ENCODE measurements at regions of chrX and their contacts with region 1.

Region 1: GRCh38 chrX:148049441-148049840 is 68.3 kb downstream of the FMR1NB start:
- DNase-seq: peak; percentile 22
- CTCF ChIP-seq: peak; percentile 18

Region 2: DNA sequence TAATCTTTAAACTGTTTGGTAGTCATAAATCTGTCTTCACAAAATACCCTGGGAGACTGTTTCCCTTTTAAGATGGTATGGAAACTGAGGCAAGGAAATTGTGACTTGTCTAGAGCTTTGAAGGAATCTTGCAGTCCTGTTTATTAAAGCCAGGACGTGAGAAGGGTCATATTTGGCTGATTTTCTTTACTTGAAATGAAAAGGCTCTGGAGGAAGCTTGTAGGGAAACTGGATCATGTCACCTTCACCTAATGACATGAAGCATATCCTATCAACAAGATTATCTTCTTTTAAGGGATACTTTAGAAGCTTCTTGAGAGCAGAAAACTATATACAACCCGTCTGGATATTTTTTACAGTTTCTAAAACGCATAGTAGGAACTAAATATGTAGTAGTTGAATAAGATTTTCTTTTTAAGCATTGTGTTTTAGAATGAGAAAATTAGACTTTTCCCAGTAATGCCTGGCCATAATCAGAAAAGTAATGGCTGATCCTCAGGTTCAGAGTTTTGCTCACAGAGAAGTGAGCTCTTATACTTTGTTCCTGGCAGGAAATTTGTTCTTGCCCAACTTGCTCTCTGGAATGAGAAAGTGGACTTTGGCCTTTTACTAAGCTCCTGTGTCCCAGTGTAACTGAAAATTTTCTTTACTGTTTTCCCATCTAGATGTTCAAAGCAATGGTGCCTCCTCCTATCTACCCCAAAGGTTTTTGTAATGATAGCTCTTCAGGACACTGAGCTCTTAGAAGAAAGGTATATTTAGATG is 314.2 kb after region 1 on chrX:
- in situ Hi-C with region 1: no loop called
- DNase-seq: no peak
- CTCF ChIP-seq: no peak

Region 3: GRCh38 chrX:149470955-149471354 is 1421.5 kb after region 1 on chrX:
- in situ Hi-C with region 1: loop called (anchors 25 kb)
- DNase-seq: peak; percentile 77
- CTCF ChIP-seq: peak; percentile 91

Measured in GM13976 (cell line).